Kidney (tissue), 22 donors: ENCODE measurements at regions of chr14 and their contacts with region 1.

Region 1: GRCh38 chr14:75493580-75494130 is 28.6 kb upstream of the BATF start:
- DNase-seq: peak in 4 of 5 donors; percentile 64 to 80 (median 72)
- H3K4me3 ChIP-seq: no peak overlapping the region
- H3K27ac ChIP-seq: no peak overlapping the region
- H3K4me1 ChIP-seq: no peaks in the 10 kb centered on the region
- H3K27me3 ChIP-seq: no peaks in the 10 kb centered on the region
- CTCF ChIP-seq: no peak

Region 2: GRCh38 chr14:75310295-75311111 is 183.2 kb before region 1 on chr14:
- intact Hi-C with region 1: loop called (anchors 5 kb)
- DNase-seq: peak; percentile 86 to 94 (median 87)
- H3K4me3 ChIP-seq: no peak overlapping the region
- H3K27ac ChIP-seq: peak overlapping the region; percentile 73 to 81
- H3K4me1 ChIP-seq: peaks cover 0 to 13% (median 8%) of the 10 kb centered on the region in 3 donors
- H3K27me3 ChIP-seq: no peaks in the 10 kb centered on the region
- CTCF ChIP-seq: no peak